ENCODE measurements at regions of chr9 and their contacts with region 1.

Region 1: DNA sequence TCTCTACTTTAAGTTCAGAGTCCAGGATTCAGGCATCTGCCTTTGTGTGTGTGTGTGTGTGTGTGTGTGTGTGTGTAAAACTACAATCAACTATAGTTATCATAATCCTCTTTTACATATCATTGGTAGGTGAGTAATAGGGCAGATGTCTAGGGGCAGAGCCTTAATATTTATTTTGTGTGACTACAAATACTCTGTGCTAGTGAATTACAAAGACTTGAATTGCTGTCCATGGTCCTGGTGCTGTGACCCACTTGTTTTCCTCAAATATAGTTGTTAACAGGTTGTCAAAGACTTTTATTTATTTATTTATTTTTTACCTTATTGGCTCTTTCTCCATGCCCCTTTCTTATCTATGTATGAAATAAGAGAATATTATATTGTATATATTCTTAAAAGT is 196.8 kb downstream of the ANXA1 start:
- DNase-seq: no peak
- ATAC-seq: no peak
- H3K4me3 ChIP-seq: no peak overlapping the region
- H3K27ac ChIP-seq: no peak overlapping the region
- H3K4me1 ChIP-seq: no peaks in the 10 kb centered on the region
- H3K27me3 ChIP-seq: no peaks in the 10 kb centered on the region
- CTCF ChIP-seq: no peak

Region 2: GRCh38 chr9:73011181-73011750 is 337.2 kb before region 1 on chr9:
- intact Hi-C with region 1: no loop called
- DNase-seq: no peak
- ATAC-seq: peak in 2 of 8 donors; percentile 44 to 52
- H3K4me3 ChIP-seq: no peak overlapping the region
- H3K27ac ChIP-seq: no peak overlapping the region
- H3K4me1 ChIP-seq: peaks cover 0 to 10% (median 0%) of the 10 kb centered on the region in 9 donors
- H3K27me3 ChIP-seq: no peaks in the 10 kb centered on the region
- CTCF ChIP-seq: no peak

Region 3: DNA sequence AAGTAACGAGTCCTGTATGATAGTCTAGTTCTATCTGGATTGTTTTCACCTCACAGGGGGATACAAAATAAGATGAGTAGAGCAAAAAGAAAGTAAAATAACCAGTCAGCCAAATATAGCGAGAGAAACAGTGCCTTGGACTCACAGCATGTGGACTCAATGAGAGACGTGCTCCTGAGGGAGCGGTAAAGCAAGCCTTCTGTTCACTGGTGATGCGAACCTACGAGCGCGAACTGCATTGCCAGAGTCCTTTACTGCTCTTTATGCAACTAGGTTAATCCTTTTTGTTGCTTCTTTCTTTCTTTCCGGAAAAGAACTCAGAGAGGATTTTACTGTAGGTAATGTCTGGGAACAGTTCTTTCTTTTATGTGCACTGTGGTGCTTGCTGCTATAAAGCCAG is 64.1 kb before region 1 on chr9:
- intact Hi-C with region 1: loop called in 1 of 10 experiments (anchors 10 kb)
- DNase-seq: no peak
- ATAC-seq: no peak
- H3K4me3 ChIP-seq: no peak overlapping the region
- H3K27ac ChIP-seq: no peak overlapping the region
- H3K4me1 ChIP-seq: no peaks in the 10 kb centered on the region
- H3K27me3 ChIP-seq: no peaks in the 10 kb centered on the region
- CTCF ChIP-seq: no peak

Region 4: GRCh38 chr9:73649552-73649951 is 301.1 kb after region 1 on chr9:
- intact Hi-C with region 1: no loop called
- DNase-seq: no peak
- ATAC-seq: no peak
- H3K4me3 ChIP-seq: no peak overlapping the region
- H3K27ac ChIP-seq: no peak overlapping the region
- H3K4me1 ChIP-seq: no peaks in the 10 kb centered on the region
- H3K27me3 ChIP-seq: no peaks in the 10 kb centered on the region
- CTCF ChIP-seq: no peak